Dorsolateral prefrontal cortex (tissue), 120 donors: ENCODE measurements at regions of chr1 and their contacts with region 1.

Region 1: DNA sequence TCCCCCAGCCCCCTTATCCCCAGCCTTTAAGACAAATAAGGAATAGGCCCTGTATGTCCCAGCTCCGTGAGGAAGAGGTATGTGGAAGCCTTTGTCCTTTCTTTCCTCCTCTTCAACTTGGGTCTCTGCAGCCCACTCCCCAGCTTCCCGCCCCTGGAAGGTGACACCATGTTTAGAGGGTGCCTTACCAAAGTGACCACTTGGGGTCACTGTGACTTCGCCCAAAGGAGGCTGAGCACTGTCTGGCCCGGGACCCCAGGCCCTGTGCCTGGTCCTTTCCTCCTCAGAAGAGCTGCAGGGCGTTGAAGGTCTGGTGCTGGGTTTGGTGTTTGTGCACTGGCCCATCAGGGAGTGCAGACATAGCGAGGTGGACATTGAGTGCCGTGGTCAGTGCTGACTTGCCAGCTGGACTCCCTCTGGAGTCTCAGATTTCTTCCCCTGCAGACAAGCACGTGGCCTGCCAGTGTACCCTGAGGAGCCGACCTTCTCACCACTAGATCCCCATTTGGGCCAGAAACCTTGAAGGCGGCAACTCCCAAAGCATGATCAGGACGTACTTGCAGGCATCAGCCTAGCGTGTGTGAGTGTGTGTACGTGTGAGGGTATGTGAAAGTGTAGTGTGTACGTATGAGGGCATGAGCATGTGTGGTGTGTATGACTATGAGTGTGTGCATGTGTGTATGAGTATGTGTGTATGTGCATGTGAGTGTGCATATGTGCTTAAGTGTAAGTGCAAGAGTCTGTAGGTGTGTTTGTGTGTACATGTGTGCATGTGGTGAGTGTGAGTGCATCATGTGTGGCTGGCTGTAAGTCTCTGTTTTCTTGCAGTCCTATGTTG is 181.4 kb upstream of the KIAA0040 start:
- DNase-seq: peak in 6 of 10 donors; percentile 14 to 67 (median 37)
- H3K4me3 ChIP-seq: no peak overlapping the region
- H3K27ac ChIP-seq: no peak overlapping the region
- H3K27me3 ChIP-seq: no peaks in the 10 kb centered on the region
- CTCF ChIP-seq: peak; percentile 40 to 84 (median 74)

Region 2: DNA sequence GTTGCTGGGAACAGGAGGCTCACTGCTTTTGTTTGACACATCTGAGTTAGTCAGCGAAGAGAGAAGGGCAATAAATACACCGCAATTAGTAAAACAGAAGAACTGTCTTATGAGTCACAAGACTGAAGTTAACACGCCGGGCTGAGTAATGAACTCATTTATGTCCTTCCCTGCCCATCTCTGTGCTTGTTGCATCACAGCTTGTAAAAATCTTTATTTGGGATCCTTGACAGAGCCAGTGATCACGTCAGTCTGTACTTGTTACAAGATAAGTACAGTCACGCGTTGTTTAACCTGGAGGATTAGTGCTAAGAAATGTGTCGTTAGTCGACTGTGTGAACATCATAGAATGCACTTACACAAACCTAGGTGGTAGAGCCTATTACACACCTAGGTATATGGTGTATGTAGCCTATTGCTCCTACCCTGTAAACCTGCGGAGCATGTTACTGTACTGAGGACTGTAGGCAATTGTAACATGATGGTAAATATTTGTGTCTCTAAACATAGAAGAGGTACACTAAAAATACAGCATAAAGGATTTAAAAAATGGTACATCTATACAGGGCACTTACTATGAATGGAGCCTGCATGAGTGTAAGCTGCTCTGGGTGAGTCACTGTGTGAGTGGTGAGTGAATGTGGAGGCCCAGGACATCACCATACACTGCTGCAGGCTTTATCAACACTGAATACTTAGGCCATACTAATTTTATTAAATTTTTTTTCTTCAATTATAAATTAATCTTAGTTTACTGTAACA is 97.2 kb after region 1 on chr1:
- intact Hi-C with region 1: loop called in 1 of 2 experiments (anchors 10 kb)
- DNase-seq: peak in 1 of 10 donors; percentile 30
- H3K4me3 ChIP-seq: no peak overlapping the region
- H3K27ac ChIP-seq: no peak overlapping the region
- H3K27me3 ChIP-seq: peaks cover 0 to 4% (median 0%) of the 10 kb centered on the region in 45 donors
- CTCF ChIP-seq: no peak

Region 3: DNA sequence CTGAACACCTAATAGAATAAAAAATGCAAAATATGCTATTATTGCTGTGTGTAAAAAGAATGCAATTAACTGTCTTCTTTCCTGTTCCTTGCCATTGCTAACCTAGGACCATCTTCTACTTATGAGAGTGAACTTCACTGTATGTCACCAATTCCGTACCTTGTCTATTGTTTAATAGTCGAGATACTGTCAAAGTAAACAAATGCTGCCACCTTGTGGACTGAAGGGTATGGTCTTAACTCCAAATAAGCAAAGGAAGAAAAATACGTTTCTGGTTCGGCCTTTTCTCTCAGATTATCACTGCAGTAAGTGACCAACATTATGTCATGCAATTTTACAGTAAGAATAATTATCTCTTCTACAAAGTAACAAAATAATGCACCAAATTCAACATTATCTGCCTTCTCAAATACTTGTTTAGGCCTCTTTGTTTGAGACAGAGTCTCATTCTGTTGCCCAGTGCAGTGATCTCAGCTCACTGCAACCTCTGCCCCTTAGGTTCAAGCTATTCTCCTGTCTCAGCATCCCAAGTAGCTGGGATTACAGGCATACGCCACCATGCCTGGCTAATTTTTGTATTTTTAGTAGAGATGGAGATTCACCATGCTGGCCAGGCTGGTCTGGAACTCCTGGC is 699.6 kb after region 1 on chr1:
- intact Hi-C with region 1: loop called (anchors 5 kb)
- DNase-seq: peak in 3 of 10 donors; percentile 6 to 54 (median 44)
- H3K4me3 ChIP-seq: no peak overlapping the region
- H3K27ac ChIP-seq: no peak overlapping the region
- H3K27me3 ChIP-seq: no peaks in the 10 kb centered on the region
- CTCF ChIP-seq: peak; percentile 57 to 95 (median 83)

Region 4: GRCh38 chr1:176843352-176844297 is 1469.6 kb after region 1 on chr1:
- intact Hi-C with region 1: loop called in 1 of 2 experiments (anchors 5 kb)
- DNase-seq: peak in 1 of 10 donors; percentile 27
- H3K4me3 ChIP-seq: no peak overlapping the region
- H3K27ac ChIP-seq: no peak overlapping the region
- H3K27me3 ChIP-seq: no peaks in the 10 kb centered on the region
- CTCF ChIP-seq: peak; percentile 36 to 87 (median 66)